ENCODE measurements at regions of chr9 and their contacts with region 1.

Region 1: DNA sequence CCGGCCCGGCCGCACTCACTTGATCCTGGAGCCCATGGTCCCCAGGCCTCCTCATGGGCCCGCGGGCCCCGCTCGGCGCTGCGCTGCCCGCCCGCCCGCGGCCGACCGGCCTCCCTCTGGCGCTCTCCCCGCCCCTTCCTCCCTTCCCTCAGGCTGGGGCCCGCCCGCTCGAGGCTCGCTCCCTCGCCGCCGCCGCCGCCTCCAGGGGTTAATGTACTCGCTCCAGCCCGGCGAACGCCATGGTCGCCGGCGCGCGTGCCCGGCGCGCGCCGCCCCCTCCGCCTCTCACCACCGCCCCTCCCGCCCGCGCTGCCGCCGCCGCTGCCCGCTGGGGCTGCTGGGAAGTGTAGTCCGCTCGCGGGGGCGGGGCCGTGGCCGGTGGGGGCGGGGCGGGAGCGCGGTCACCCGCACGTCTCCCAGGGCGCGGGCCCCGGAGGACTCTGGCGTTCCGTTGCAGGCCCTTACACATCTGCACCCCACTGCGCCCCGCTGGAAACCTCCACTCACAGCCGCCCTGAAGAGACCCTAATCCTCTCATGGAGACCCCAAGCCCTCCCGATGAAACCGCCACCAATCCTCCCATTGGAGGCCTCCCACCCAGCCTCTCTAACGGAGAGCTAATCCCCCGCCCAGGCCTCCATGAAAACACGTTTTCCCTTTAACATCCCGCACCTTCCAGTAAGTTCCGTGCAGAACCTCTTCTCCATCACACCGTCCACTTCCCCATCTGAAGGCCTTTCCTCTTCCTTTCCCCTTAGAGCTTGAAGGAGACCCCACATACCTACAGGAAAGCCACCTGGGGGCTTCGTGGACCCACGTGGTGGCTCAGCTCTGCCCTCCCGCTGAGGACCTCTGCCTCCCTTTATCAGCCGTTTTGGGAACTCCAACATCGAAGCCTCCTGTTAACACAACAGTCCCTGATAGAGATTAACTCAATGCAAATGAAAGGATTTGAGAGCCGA is at the start of gene DENND1A:
- DNase-seq: peak; percentile 93
- ATAC-seq: peak; percentile 91
- H3K4me3 ChIP-seq: peak within 1 kb of the TSS; percentile 43 to 68 (median 64)
- H3K4me3 Mint-ChIP-seq: peak within 1 kb of the TSS; percentile 90
- H3K27ac ChIP-seq: peak within 1 kb of the TSS; percentile 21 to 70
- H3K27ac Mint-ChIP-seq: peak within 1 kb of the TSS; percentile 84
- H3K4me1 ChIP-seq: peaks cover 23 to 27% of the 10 kb centered on the region in 2 donors
- H3K4me1 Mint-ChIP-seq: peaks cover 38% of the 10 kb centered on the region
- H3K27me3 ChIP-seq: peaks cover 0 to 2% (median 0%) of the 10 kb centered on the region in 4 experiments
- H3K27me3 Mint-ChIP-seq: peaks cover 7% of the 10 kb centered on the region
- CTCF ChIP-seq: no peak
- total RNA-seq, gene DENND1A: 26.0 and 30.3 TPM in 2 replicates

Region 2: DNA sequence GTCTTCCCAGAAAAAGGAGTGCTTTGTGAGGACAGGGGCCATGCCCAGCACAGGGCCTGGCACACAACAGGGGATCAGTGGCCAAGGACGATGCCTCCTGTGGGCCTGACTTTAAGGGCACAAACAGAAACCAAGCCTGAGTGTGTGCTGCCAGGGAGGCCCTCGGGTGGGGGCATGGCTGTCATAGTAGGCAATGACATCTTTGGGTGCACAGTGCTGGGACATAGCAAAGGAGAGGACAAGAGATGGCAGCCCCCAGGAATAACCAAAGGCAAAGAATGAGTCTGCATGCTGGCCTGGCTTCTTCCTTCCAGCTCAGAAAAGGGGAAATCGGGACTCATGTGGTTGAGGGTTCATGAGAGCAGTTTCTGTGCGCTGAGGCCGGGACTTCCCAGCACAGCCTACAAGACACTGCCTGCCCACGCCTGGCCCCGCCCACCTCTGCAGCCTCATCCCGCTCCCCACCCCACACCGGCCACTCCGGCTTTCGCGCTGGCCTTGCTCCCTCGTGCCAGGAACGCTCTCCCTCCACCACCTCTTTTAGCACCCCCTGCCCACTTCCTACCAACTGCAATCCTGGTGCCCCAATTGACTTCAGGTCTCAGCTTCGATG is 67.6 kb after region 1 on chr9:
- CTCF ChIA-PET with region 1: no interaction called
- POLR2A ChIA-PET with region 1: no interaction called
- intact Hi-C with region 1: loop called (anchors 5 kb)
- DNase-seq: peak; percentile 81
- ATAC-seq: peak; percentile 66
- H3K4me3 ChIP-seq: peak overlapping the region in 3 of 5 experiments; percentile 13 to 66 (median 22)
- H3K4me3 Mint-ChIP-seq: peak overlapping the region; percentile 86
- H3K27ac ChIP-seq: no peak overlapping the region
- H3K27ac Mint-ChIP-seq: peak overlapping the region; percentile 38
- H3K4me1 ChIP-seq: peaks cover 42 to 47% of the 10 kb centered on the region in 2 donors
- H3K4me1 Mint-ChIP-seq: peaks cover 42% of the 10 kb centered on the region
- H3K27me3 ChIP-seq: peaks cover 0 to 66% (median 43%) of the 10 kb centered on the region in 4 experiments
- H3K27me3 Mint-ChIP-seq: peaks cover 69% of the 10 kb centered on the region
- CTCF ChIP-seq: no peak

Region 3: DNA sequence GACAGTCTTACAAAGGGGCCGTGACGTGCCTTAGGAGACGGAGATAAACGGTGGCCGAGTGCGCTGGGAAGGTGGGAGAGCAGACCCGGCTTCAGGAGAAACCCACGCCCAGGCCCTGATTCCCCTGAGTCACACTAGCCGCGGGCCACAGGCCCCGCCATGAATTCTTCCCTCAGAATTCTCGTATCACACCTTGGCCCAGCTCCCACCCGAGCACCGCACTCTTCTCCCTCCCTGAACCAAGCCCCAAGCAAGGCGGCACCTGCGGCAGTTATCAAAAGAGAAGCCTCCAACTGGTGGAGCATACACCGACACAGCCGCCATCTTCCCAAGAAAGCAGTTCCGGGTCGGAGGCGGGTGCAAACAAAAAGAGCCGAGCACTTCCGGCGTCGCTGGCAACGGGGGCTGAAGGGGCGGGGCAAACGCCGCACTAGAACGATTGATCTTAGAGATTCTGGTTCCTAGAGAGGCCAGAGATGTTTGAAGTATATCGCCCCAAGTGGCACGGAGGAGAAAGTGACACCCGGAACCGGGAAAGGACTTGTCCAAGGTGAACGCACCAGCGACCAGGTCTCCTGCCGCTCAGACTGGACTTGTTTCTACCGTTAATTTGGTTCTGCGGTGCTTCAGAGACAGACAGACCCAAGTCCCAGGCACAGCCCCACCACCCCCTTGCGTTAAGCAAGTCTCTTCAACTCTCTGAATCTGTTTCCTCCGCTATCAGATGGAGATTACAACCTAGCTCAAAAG is 485.1 kb after region 1 on chr9 and contains the start of gene PSMB7:
- CTCF ChIA-PET with region 1: no interaction called
- POLR2A ChIA-PET with region 1: no interaction called
- intact Hi-C with region 1: loop called (anchors 1 kb)
- DNase-seq: peak; percentile 98
- ATAC-seq: peak; percentile 96
- H3K4me3 ChIP-seq: peak within 1 kb of the TSS; percentile 81 to 89 (median 87)
- H3K4me3 Mint-ChIP-seq: peak within 1 kb of the TSS; percentile 98
- H3K27ac ChIP-seq: peak within 1 kb of the TSS; percentile 48 to 82
- H3K27ac Mint-ChIP-seq: peak within 1 kb of the TSS; percentile 90
- H3K4me1 ChIP-seq: peaks cover 6 to 27% of the 10 kb centered on the region in 2 donors
- H3K4me1 Mint-ChIP-seq: peaks cover 29% of the 10 kb centered on the region
- H3K27me3 ChIP-seq: no peaks in the 10 kb centered on the region
- H3K27me3 Mint-ChIP-seq: no peaks in the 10 kb centered on the region
- CTCF ChIP-seq: peak; percentile 89
- total RNA-seq, gene PSMB7: 69.7 and 73.1 TPM in 2 replicates